CD8-positive, alpha-beta T cell (primary cell): ENCODE measurements at regions of chr7 and their contacts with region 1.

Region 1: GRCh38 chr7:130069978-130070860 is at the start of gene KLHDC10:
- DNase-seq: peak; percentile 89 to 99 (median 96)
- ATAC-seq: peak; percentile 93
- H3K4me3 ChIP-seq: peak within 1 kb of the TSS; percentile 67 to 72
- H3K4me3 Mint-ChIP-seq: peak within 1 kb of the TSS; percentile 87
- H3K27ac ChIP-seq: peak within 1 kb of the TSS; percentile 76 to 85
- H3K27ac Mint-ChIP-seq: peak within 1 kb of the TSS; percentile 92
- H3K4me1 ChIP-seq: peaks cover 22% of the 10 kb centered on the region
- H3K4me1 Mint-ChIP-seq: peaks cover 45% of the 10 kb centered on the region
- H3K27me3 ChIP-seq: peaks cover 0 to 2% of the 10 kb centered on the region in 2 experiments
- H3K27me3 Mint-ChIP-seq: no peaks in the 10 kb centered on the region
- CTCF ChIP-seq: no peak
- total RNA-seq, gene KLHDC10: 9.6 to 9.9 TPM

Region 2: DNA sequence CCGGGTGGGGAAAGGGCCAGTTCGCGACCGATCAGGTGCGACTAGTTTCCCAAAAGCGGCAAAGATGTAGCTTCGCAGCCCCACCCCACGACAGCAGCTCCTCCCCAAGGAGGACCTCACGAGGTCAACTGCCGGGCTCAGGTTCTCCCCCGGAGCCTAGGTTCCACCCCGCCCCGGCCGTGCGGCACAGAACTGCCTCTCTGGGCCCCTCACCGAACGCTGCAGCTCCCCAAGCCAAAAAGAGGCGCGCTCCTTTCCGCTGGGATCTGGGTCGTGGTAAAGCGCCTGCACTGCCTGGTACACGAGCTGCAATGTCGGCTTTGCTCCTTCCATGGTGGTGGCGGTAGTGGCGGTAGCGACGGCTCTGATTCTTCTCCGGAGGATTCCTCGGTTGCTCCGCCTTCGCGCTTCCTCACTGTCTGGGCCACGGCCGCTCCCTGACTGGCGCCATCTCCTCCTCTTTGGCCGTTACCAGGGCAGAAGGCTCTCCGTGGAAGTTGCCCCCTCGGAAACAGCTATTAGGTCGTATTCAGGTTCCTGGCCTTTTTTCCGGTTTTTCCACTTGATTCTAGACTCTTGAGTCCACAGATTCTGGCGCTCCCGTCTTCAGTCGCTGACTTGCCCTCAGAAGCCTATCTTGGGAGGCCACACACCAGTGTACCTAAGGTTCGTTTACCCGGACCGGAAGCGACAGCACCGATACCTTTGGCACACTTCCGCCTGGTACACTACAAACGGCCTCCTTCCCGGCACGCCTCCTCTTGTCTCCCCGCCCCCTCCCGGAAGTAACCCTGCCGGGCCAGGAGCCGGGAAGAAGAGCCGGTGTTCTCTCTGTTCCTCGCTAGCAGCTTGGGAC is 1015.6 kb before region 1 on chr7 and contains the start of gene TNPO3:
- CTCF ChIA-PET with region 1: no interaction called
- POLR2A ChIA-PET with region 1: no interaction called
- intact Hi-C with region 1: loop called in 1 of 2 experiments (anchors 10 kb)
- DNase-seq: peak; percentile 77 to 94 (median 90)
- ATAC-seq: peak; percentile 86
- H3K4me3 ChIP-seq: peak within 1 kb of the TSS; percentile 80 to 89
- H3K4me3 Mint-ChIP-seq: peak within 1 kb of the TSS; percentile 96
- H3K27ac ChIP-seq: peak within 1 kb of the TSS; percentile 84 to 93
- H3K27ac Mint-ChIP-seq: peak within 1 kb of the TSS; percentile 98
- H3K4me1 ChIP-seq: peaks cover 29% of the 10 kb centered on the region
- H3K4me1 Mint-ChIP-seq: peaks cover 38% of the 10 kb centered on the region
- H3K27me3 ChIP-seq: no peaks in the 10 kb centered on the region
- H3K27me3 Mint-ChIP-seq: peaks cover 3% of the 10 kb centered on the region
- CTCF ChIP-seq: no peak
- total RNA-seq, gene TNPO3: 17.0 to 17.2 TPM

Region 3: GRCh38 chr7:130047821-130048220 is 22.4 kb before region 1 on chr7:
- CTCF ChIA-PET with region 1: interaction called, 5 read pairs
- POLR2A ChIA-PET with region 1: interaction called, 11 read pairs
- intact Hi-C with region 1: loop called (anchors 1 kb)
- DNase-seq: no peak
- ATAC-seq: no peak
- H3K4me3 ChIP-seq: no peak overlapping the region
- H3K4me3 Mint-ChIP-seq: no peak overlapping the region
- H3K27ac ChIP-seq: no peak overlapping the region
- H3K27ac Mint-ChIP-seq: no peak overlapping the region
- H3K4me1 ChIP-seq: peaks cover 3% of the 10 kb centered on the region
- H3K4me1 Mint-ChIP-seq: peaks cover 14% of the 10 kb centered on the region
- H3K27me3 ChIP-seq: no peaks in the 10 kb centered on the region
- H3K27me3 Mint-ChIP-seq: no peaks in the 10 kb centered on the region
- CTCF ChIP-seq: no peak

Region 4: DNA sequence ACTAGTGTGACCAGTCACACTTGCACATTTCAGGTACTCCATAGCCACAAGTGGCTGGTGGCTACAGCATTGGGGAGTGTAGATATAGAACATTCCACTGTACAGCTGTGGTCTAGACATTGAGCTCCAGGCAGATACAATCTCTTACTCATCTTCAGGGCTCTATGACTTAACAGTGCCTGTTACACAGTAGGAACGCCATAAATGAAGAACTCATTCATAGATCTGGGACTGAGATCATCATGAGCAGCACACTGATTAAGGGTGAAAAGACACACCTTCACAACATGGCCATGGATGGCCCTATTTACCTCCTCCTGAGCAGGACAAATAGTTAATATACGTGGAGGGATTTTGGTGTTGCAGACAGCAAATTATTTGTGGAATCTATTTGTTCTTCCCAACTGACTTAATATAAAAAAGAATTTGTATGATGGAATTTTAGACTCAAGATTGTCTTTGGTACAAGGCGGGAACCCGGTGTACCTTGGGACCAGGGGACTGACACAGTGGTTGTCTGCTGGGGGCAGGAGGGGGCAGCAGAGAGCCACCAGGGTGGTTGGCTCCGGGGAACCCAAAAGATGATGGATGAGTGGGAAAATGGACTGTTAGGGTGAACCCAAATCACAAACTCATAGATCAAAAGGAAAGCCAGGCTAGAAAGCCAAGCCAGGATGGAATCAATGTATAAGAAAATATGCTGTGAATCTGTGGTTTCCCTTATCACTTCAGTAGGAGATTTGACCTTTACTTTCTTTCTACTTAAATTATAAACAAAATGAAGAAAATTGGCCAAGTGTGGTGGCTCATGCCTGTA is 172.2 kb after region 1 on chr7:
- CTCF ChIA-PET with region 1: no interaction called
- POLR2A ChIA-PET with region 1: no interaction called
- intact Hi-C with region 1: loop called in 1 of 2 experiments (anchors 1 kb)
- DNase-seq: peak; percentile 21 to 79 (median 58)
- ATAC-seq: peak; percentile 85
- H3K4me3 ChIP-seq: no peak overlapping the region
- H3K4me3 Mint-ChIP-seq: no peak overlapping the region
- H3K27ac ChIP-seq: no peak overlapping the region
- H3K27ac Mint-ChIP-seq: no peak overlapping the region
- H3K4me1 ChIP-seq: no peaks in the 10 kb centered on the region
- H3K4me1 Mint-ChIP-seq: peaks cover 8% of the 10 kb centered on the region
- H3K27me3 ChIP-seq: peaks cover 0 to 6% of the 10 kb centered on the region in 2 experiments
- H3K27me3 Mint-ChIP-seq: no peaks in the 10 kb centered on the region
- CTCF ChIP-seq: peak; percentile 78

Region 5: DNA sequence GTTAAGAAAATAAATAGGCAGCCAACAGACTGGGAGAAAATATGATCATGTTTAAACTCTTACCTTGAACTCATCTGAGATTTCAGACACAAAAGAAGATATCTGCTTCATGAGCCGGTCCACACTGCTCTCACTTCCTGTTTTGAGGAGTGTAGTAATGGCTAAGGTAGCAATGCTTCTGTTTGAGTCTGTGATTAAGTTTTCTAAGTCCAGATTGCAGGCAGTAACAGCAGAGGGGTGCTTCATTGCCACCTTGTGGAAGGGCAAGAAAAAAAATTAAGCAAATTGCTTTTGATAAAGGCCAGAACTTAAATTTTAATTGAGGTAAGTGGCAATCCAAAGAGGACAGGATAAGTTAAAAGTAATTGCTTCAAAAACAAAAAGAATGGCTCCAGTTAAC is 490.8 kb after region 1 on chr7:
- CTCF ChIA-PET with region 1: no interaction called
- POLR2A ChIA-PET with region 1: no interaction called
- intact Hi-C with region 1: loop called (anchors 5 kb)
- DNase-seq: peak in 2 of 9 experiments; percentile 7 to 29
- ATAC-seq: no peak
- H3K4me3 ChIP-seq: no peak overlapping the region
- H3K4me3 Mint-ChIP-seq: no peak overlapping the region
- H3K27ac ChIP-seq: no peak overlapping the region
- H3K27ac Mint-ChIP-seq: peak overlapping the region; percentile 35
- H3K4me1 ChIP-seq: no peaks in the 10 kb centered on the region
- H3K4me1 Mint-ChIP-seq: peaks cover 4% of the 10 kb centered on the region
- H3K27me3 ChIP-seq: no peaks in the 10 kb centered on the region
- H3K27me3 Mint-ChIP-seq: no peaks in the 10 kb centered on the region
- CTCF ChIP-seq: no peak

Region 6: DNA sequence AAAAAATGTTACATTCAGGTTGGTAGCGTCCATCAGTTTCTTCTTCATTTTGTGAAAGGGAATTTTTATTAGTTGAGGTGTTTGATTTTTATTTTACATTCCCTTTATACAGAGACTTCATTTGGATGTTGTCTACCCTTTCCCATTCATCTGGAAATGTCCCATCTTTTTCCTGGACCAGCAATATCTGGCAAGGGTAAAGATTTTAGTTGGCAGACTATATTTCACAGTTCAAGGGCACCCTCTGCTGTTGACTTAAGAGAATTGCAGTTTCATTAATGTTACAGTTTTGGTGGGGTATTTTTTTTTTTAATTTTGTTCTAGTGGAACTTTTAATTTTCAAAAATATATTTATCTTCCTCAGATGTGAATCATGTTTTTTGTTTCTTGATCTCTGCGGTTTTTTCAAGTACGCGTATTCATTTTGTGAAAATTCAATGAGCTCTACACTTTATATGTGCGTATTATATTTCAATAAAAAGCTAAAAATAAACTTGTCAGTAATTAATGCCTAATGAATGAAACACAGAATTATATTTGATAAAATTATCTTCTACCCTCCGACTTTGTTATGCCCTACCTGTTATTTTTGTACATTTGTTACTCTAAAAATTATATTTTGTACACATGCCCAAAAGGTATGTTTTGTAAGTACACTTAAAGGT is 761.7 kb after region 1 on chr7:
- CTCF ChIA-PET with region 1: interaction called, 4 read pairs
- POLR2A ChIA-PET with region 1: no interaction called
- intact Hi-C with region 1: loop called in 1 of 2 experiments (anchors 1 kb)
- DNase-seq: peak in 2 of 9 experiments; percentile 59 to 67
- ATAC-seq: peak; percentile 42
- H3K4me3 ChIP-seq: no peak overlapping the region
- H3K4me3 Mint-ChIP-seq: no peak overlapping the region
- H3K27ac ChIP-seq: no peak overlapping the region
- H3K27ac Mint-ChIP-seq: no peak overlapping the region
- H3K4me1 ChIP-seq: no peaks in the 10 kb centered on the region
- H3K4me1 Mint-ChIP-seq: no peaks in the 10 kb centered on the region
- H3K27me3 ChIP-seq: no peaks in the 10 kb centered on the region
- H3K27me3 Mint-ChIP-seq: no peaks in the 10 kb centered on the region
- CTCF ChIP-seq: peak; percentile 84